Endothelial cell of umbilical vein (primary cell): ENCODE measurements at regions of chr15 and their contacts with region 1.

Region 1: DNA sequence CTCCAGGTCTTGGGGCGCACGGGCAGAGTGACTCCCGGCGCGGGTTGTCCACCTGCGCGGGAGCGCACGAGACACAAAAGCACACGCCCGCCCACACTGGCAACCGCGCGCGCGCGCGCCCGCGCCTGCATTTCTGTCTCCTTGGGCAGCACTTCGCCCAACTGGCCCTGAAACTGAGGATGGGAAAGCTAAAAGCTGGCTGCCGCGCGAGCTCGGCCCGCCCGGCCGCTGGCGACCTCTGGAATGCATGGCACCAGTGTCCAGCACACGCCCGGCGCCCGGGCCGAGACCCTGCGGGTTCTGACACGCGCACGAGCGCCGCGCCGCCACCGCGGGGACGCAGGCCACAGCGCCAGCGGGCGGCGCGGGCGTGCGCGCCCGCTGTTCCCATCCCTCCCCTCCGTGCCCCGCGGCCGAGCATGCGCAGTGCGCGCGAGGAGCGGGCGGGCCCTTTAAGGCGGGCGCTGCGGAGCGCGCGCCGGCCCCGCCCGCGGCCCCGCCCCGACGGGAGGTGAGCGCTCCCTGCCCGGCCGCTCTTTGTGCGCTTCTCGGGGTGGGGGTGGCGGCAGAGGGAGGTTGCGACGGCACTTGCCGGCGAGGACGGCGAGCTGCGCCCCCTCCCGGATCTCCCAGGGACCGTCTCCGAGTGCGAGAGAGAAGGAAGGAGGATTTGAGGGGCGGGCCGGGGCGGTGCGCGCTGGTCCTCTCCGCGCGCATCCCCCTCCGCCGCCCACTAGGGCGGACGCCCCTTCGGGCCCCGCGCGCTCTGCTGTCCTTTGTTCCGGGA is 1.0 kb upstream of the MEX3B start:
- DNase-seq: peak; percentile 94
- H3K4me3 ChIP-seq: peak overlapping the region; percentile 84 to 97 (median 95)
- H3K27ac ChIP-seq: peak overlapping the region; percentile 96
- H3K4me1 ChIP-seq: peaks cover 21% of the 10 kb centered on the region
- H3K27me3 ChIP-seq: peaks cover 1 to 2% of the 10 kb centered on the region in 2 experiments
- CTCF ChIP-seq: peak; percentile 73 to 85
- POLR2A ChIP-seq: peak; percentile 79

Region 2: DNA sequence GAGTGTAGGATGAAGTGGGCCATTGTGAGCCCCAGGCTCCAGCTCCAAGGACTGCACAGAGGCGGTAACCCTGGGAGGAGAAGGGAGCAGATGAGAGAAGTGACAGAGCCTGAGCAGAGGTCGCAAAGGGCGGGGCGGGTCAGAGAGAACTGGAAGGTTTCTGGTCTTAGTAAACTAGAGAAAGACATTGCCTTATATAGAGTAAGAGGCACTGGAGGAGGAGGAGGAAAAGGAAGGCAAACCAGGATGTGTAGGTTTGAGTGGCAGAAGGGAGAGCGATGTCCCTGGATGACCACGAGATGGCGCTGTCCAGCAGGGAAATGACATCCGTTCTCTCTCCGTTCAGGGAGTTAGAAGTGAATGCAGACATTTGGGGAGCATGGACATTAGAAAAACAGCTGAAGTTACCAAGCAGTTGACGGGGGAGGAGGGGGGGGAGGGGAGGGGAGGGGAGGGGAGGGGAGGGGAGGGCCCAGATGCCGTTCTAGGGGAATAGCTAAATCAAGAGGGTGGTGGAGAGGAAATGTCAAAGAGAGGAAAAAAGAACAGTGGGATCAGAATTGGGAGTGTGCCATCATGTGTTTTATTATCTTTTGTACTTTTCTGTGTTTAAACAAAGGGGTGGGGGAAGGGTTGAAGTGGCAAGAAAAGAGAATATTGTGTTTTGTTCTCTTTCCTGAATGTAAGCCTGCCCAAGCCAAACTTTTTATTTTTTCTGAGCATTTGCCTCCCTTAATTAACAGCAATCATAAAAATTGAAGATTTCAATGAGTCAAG is 771.7 kb before region 1 on chr15:
- CTCF ChIA-PET with region 1: no interaction called
- POLR2A ChIA-PET with region 1: no interaction called
- dilution Hi-C with region 1: no loop called
- intact Hi-C with region 1: loop called (anchors 10 kb)
- DNase-seq: peak; percentile 75
- H3K4me3 ChIP-seq: no peak overlapping the region
- H3K27ac ChIP-seq: no peak overlapping the region
- H3K4me1 ChIP-seq: no peaks in the 10 kb centered on the region
- H3K27me3 ChIP-seq: peaks cover 7 to 12% of the 10 kb centered on the region in 2 experiments
- CTCF ChIP-seq: peak; percentile 74 to 89
- POLR2A ChIP-seq: no peak

Region 3: DNA sequence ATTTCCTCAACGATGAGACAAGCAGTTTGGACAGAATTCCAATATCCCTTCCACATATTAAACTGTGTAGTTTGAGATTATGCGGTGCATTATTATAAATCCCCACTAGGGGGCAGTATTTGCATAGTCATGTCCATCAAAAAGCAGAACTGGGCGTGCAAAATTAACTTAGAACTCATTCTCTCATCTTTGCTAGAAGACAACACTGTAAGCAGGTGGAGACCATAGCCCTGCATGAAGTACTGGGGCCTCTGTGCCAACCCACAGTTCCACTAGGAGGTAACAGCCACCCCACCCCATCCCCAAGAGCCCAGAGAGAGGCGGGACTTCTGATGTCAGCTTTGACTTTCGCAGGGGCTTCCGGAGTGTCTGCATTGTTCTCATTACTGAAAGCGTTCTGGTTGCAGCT is 566.2 kb before region 1 on chr15:
- CTCF ChIA-PET with region 1: no interaction called
- POLR2A ChIA-PET with region 1: no interaction called
- dilution Hi-C with region 1: no loop called
- intact Hi-C with region 1: loop called (anchors 1 kb)
- DNase-seq: peak; percentile 70
- H3K4me3 ChIP-seq: no peak overlapping the region
- H3K27ac ChIP-seq: no peak overlapping the region
- H3K4me1 ChIP-seq: peaks cover under 1% of the 10 kb centered on the region
- H3K27me3 ChIP-seq: no peaks in the 10 kb centered on the region
- CTCF ChIP-seq: peak; percentile 48 to 66
- POLR2A ChIP-seq: no peak

Region 4: DNA sequence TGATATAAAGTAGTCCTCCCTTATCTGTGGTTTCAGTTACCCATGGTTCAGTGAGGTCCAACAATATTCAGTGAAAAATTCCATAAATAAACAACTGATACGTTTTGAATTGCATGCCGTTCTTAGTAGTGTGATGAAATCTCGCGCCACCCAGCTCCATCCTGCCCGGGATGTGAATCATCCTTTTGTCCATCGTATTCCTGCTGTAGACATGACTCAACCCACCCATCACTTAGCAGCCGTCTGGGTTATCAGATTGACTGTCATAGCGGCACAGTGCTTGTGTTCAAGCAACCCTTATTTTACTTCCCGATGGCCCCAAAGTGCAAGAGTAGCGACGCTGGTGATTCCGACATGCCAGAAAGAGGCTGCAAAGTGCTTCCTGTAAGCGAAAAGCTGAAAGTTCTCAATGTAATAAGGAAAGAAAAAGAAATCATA is 46.9 kb after region 1 on chr15:
- CTCF ChIA-PET with region 1: no interaction called
- POLR2A ChIA-PET with region 1: no interaction called
- dilution Hi-C with region 1: no loop called
- intact Hi-C with region 1: loop called (anchors 2 kb)
- DNase-seq: peak; percentile 74
- H3K4me3 ChIP-seq: peak overlapping the region in 1 of 3 experiments; percentile 16
- H3K27ac ChIP-seq: peak overlapping the region; percentile 47
- H3K4me1 ChIP-seq: peaks cover 9% of the 10 kb centered on the region
- H3K27me3 ChIP-seq: no peaks in the 10 kb centered on the region
- CTCF ChIP-seq: no peak
- POLR2A ChIP-seq: no peak

Region 5: GRCh38 chr15:82197733-82198594 is 151.1 kb after region 1 on chr15:
- CTCF ChIA-PET with region 1: interaction called, 4 read pairs
- POLR2A ChIA-PET with region 1: no interaction called
- dilution Hi-C with region 1: no loop called
- intact Hi-C with region 1: loop called (anchors 2 kb)
- DNase-seq: peak; percentile 74
- H3K4me3 ChIP-seq: no peak overlapping the region
- H3K27ac ChIP-seq: no peak overlapping the region
- H3K4me1 ChIP-seq: no peaks in the 10 kb centered on the region
- H3K27me3 ChIP-seq: no peaks in the 10 kb centered on the region
- CTCF ChIP-seq: peak; percentile 75 to 81
- POLR2A ChIP-seq: no peak